Mammary epithelial cell (primary cell): ENCODE measurements at regions of chr17 and their contacts with region 1.

Region 1: DNA sequence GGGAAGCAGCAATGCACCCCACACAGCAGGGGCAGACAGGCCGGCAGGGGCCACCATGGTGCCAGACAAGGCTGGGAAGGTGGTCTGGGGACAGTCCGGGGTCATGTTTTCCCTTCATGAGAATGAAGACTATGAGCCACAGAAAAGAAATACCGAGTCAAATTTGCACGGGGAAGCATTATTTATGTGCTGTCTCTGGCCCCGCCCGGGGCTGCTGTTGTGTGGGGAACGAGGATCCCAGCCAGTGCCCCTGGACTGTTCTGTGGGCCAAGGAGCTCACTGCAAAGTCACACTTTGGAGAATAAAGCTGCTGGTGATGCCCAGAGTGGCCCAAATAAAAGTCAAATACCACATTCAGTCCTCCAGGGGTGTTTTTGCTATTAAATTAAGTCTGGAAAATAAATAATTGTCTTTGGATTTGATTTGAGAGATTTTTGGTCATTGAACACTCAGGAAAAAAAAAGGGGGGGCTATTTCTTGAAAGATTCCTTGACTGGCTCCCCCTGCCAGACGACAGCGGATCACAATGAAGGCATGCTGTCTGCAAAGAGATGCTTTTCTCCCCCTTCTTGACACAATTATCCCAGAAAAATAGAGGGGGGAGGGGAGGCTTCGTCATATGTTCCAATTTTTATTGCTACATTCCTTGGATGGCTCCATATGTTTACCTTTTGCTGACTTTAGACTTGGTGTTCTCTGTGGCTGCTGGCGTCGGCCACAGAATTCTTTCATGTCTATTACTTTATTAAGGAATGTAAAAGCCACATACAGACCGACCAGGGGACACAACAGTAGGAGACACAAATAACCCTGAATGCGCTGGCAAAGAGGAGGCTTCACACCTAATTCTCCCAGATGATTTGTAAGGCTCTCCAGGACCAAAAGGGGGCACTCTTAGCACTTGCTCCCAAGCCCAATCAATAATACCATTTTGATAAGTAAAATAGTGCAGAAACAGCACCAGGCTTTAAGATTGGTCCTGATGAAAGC is 27.1 kb upstream of the ANKFN1 start:
- DNase-seq: peak; percentile 17
- H3K4me3 ChIP-seq: no peak overlapping the region
- H3K27ac ChIP-seq: no peak overlapping the region
- H3K4me1 ChIP-seq: no peaks in the 10 kb centered on the region
- H3K27me3 ChIP-seq: no peaks in the 10 kb centered on the region
- CTCF ChIP-seq: peak; percentile 60 to 77

Region 2: DNA sequence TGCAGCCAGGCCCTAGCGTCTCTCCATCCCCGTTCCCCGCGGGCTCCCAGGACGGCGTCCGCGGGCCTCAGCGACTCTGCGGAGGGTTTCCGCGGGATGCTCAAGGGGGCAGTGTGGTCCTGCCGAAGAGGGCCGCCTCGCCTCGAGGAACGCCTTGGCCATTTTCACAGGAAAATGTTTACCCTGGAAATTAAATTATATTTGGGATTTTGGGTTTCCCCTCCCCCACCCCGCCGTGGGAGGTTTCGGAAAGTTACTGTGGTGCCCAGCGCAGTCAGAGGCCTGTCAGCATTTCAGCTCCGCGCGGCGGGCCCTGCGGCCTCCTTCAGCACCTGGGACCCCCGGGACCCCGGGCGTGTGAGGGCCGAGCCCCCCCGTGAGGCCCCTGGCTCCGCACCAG is 280.7 kb before region 1 on chr17:
- CTCF ChIA-PET with region 1: no interaction called
- dilution Hi-C with region 1: no loop called
- in situ Hi-C with region 1: no loop called
- intact Hi-C with region 1: loop called (anchors 10 kb)
- DNase-seq: peak; percentile 3
- H3K4me3 ChIP-seq: no peak overlapping the region
- H3K27ac ChIP-seq: no peak overlapping the region
- H3K4me1 ChIP-seq: no peaks in the 10 kb centered on the region
- H3K27me3 ChIP-seq: no peaks in the 10 kb centered on the region
- CTCF ChIP-seq: peak; percentile 57 to 73

Region 3: GRCh38 chr17:55965051-55965450 is 161.1 kb before region 1 on chr17:
- CTCF ChIA-PET with region 1: no interaction called
- dilution Hi-C with region 1: no loop called
- in situ Hi-C with region 1: no loop called
- intact Hi-C with region 1: no loop called
- DNase-seq: no peak
- H3K4me3 ChIP-seq: no peak overlapping the region
- H3K27ac ChIP-seq: no peak overlapping the region
- H3K4me1 ChIP-seq: peaks cover 18% of the 10 kb centered on the region
- H3K27me3 ChIP-seq: no peaks in the 10 kb centered on the region
- CTCF ChIP-seq: no peak

Region 4: DNA sequence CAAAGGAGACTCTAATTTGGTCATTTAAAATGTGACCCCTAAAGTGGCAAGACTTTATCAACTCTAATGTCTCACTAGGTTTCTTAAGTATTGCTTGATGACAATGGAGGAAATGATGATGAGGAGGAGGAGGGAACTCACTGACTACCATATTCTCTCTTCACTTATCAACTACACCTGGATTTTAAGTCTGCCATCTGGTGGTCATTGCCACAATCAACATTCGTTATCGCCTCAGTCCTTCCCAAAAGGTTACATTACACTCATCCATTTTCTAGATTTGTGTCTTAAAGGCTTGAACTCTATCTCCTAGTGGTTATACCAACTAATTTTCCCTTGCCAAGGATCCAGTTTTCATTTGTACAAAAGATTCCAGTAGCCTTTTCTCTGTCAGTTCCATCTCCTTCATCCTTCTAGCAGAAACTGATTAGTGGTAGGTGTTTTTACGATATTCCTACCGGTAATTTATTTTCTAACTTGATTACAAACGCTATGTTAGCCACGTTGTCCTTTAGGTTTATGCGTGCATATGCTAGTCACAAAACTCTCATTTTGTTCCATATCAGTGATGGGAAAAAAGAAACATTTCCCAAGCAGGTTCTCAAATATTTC is 352.8 kb after region 1 on chr17:
- CTCF ChIA-PET with region 1: no interaction called
- dilution Hi-C with region 1: no loop called
- in situ Hi-C with region 1: loop called in 1 of 2 experiments (anchors 25 kb)
- intact Hi-C with region 1: loop called (anchors 1 kb)
- DNase-seq: peak; percentile 32
- H3K4me3 ChIP-seq: no peak overlapping the region
- H3K27ac ChIP-seq: no peak overlapping the region
- H3K4me1 ChIP-seq: no peaks in the 10 kb centered on the region
- H3K27me3 ChIP-seq: peaks cover 1% of the 10 kb centered on the region
- CTCF ChIP-seq: peak; percentile 55 to 59